MCF 10A (cell line): ENCODE measurements at regions of chr1 and their contacts with region 1.

Region 1: DNA sequence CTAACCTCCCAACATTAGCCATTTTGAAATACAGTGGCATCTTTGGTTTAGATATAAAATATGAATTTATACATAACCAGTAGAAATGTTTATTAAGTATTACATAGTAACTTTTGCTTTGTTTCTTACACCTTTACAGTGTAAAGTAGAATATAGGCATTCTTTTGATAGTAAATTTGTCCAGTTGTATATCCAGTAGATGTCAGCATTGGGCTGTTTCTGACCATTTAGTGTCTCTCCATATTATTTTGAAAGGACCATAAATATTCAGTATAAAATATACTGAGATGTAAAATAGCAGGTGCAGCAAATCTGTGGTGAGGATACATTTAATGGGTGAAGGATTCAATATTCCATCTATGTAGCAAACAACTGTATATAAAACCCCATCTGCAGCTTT is 115.8 kb upstream of the ZRANB2 start:
- DNase-seq: peak; percentile 45
- H3K4me3 Mint-ChIP-seq: no peak overlapping the region
- H3K27ac Mint-ChIP-seq: no peak overlapping the region
- H3K4me1 Mint-ChIP-seq: no peaks in the 10 kb centered on the region
- H3K27me3 Mint-ChIP-seq: no peaks in the 10 kb centered on the region
- CTCF ChIP-seq: peak; percentile 36

Region 2: DNA sequence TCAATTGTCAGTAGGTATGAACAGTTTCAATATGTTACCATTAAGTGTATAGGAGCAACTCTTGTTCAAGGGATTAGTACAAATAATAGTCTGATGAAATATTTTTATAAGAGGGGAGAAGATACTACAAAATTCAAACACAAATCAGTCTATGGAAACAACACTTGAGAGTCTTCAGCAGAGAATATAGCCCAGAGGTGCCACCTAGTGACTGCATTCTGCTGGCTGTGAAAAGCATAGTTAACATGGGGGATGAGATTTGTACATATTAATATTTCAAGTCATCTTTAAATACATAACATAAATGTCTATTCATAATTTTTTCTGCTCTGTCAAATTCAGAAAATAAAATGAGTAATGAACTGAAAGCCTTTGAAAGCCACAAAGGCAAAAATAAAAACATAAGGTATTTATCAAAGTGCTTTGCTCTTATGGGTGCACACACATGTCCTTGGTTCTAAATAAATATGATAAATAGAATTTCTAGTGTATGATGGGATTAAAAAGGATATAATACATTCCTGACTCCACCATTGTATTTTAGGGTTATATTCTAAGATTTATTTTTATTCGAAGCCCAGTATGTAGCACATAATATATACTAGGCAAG is 325.1 kb after region 1 on chr1:
- CTCF ChIA-PET with region 1: interaction called, 54 read pairs
- POLR2A ChIA-PET with region 1: interaction called, 5 read pairs
- intact Hi-C with region 1: loop called (anchors 5 kb)
- DNase-seq: peak; percentile 60
- H3K4me3 Mint-ChIP-seq: no peak overlapping the region
- H3K27ac Mint-ChIP-seq: no peak overlapping the region
- H3K4me1 Mint-ChIP-seq: no peaks in the 10 kb centered on the region
- H3K27me3 Mint-ChIP-seq: no peaks in the 10 kb centered on the region
- CTCF ChIP-seq: peak; percentile 74

Region 3: DNA sequence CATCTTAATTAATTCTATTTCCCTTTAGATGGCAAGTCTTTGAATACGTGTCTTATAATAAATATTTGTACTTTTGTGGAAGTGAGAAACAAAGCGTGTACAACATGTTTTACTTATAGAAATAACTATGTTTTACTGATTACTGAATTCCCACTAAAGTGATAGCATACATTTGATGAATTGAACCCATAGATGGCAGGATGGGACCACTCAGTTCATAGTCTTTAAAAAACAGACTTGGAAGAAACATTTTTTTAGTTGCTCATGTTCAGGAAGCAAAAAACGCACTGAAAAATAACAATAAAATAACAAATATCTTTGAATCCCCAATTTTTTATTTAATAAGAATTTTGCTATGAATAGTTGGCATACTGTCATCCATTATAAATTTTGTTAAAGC is 391.3 kb after region 1 on chr1:
- CTCF ChIA-PET with region 1: interaction called, 11 read pairs
- POLR2A ChIA-PET with region 1: no interaction called
- intact Hi-C with region 1: no loop called
- DNase-seq: peak; percentile 29
- H3K4me3 Mint-ChIP-seq: no peak overlapping the region
- H3K27ac Mint-ChIP-seq: no peak overlapping the region
- H3K4me1 Mint-ChIP-seq: no peaks in the 10 kb centered on the region
- H3K27me3 Mint-ChIP-seq: no peaks in the 10 kb centered on the region
- CTCF ChIP-seq: peak; percentile 53